CD4-positive, alpha-beta T cell (primary cell): ENCODE measurements at regions of chr6 and their contacts with region 1.

Region 1: DNA sequence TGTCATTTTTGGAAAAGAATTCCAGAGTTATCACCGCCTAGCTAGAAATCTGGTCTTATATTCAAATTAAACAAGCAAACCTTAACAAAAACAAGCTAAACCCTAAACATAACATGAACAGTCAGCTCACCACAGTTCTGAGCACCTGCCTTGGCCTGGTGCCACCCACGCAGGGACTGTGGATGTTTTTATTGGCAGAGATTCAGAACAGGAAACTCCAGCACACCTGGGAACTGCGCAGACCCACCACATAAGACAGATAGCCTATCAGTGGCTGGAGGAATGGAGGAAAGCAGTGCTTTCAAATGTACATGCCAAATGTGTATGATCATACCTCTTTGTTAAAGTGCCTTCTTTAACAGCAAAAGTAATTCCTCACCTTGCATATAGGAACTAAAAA is 8.9 kb downstream of the SLC16A10 start:
- DNase-seq: peak; percentile 30 to 79 (median 62)
- ATAC-seq: peak; percentile 97
- H3K4me3 ChIP-seq: no peak overlapping the region
- H3K4me3 Mint-ChIP-seq: peak overlapping the region; percentile 57
- H3K27ac ChIP-seq: peak overlapping the region in 1 of 2 donors; percentile 60
- H3K27ac Mint-ChIP-seq: peak overlapping the region; percentile 86
- H3K4me1 ChIP-seq: peaks cover 8% of the 10 kb centered on the region
- H3K4me1 Mint-ChIP-seq: peaks cover 46% of the 10 kb centered on the region
- H3K27me3 ChIP-seq: no peaks in the 10 kb centered on the region
- H3K27me3 Mint-ChIP-seq: no peaks in the 10 kb centered on the region
- CTCF ChIP-seq: no peak

Region 2: GRCh38 chr6:111057074-111057752 is 39.0 kb before region 1 on chr6:
- CTCF ChIA-PET with region 1: no interaction called
- POLR2A ChIA-PET with region 1: no interaction called
- intact Hi-C with region 1: no loop called
- DNase-seq: peak in 8 of 14 experiments; percentile 2 to 68 (median 20)
- ATAC-seq: peak; percentile 68
- H3K4me3 ChIP-seq: no peak overlapping the region
- H3K4me3 Mint-ChIP-seq: no peak overlapping the region
- H3K27ac ChIP-seq: no peak overlapping the region
- H3K27ac Mint-ChIP-seq: no peak overlapping the region
- H3K4me1 ChIP-seq: no peaks in the 10 kb centered on the region
- H3K4me1 Mint-ChIP-seq: no peaks in the 10 kb centered on the region
- H3K27me3 ChIP-seq: no peaks in the 10 kb centered on the region
- H3K27me3 Mint-ChIP-seq: no peaks in the 10 kb centered on the region
- CTCF ChIP-seq: peak; percentile 87

Region 3: GRCh38 chr6:111113336-111114086 is 17.3 kb after region 1 on chr6:
- CTCF ChIA-PET with region 1: no interaction called
- POLR2A ChIA-PET with region 1: interaction called, 3 read pairs
- intact Hi-C with region 1: loop called in 1 of 2 experiments (anchors 2 kb)
- DNase-seq: peak in 8 of 14 experiments; percentile 3 to 54 (median 16)
- ATAC-seq: peak; percentile 54
- H3K4me3 ChIP-seq: no peak overlapping the region
- H3K4me3 Mint-ChIP-seq: peak overlapping the region; percentile 52
- H3K27ac ChIP-seq: peak overlapping the region; percentile 19 to 67
- H3K27ac Mint-ChIP-seq: peak overlapping the region; percentile 85
- H3K4me1 ChIP-seq: peaks cover 17% of the 10 kb centered on the region
- H3K4me1 Mint-ChIP-seq: peaks cover 48% of the 10 kb centered on the region
- H3K27me3 ChIP-seq: no peaks in the 10 kb centered on the region
- H3K27me3 Mint-ChIP-seq: no peaks in the 10 kb centered on the region
- CTCF ChIP-seq: no peak